Natural killer cell (primary cell): ENCODE measurements at regions of chr3 and their contacts with region 1.

Region 1: GRCh38 chr3:156554842-156555687 is at the start of gene SSR3:
- DNase-seq: peak; percentile 98 to 99
- ATAC-seq: peak; percentile 98 to 100 (median 98)
- H3K4me3 ChIP-seq: peak within 1 kb of the TSS; percentile 78
- H3K4me3 Mint-ChIP-seq: peak within 1 kb of the TSS; percentile 93
- H3K27ac ChIP-seq: peak within 1 kb of the TSS; percentile 63
- H3K27ac Mint-ChIP-seq: peak within 1 kb of the TSS; percentile 90 to 93
- H3K4me1 ChIP-seq: peaks cover 8% of the 10 kb centered on the region
- H3K4me1 Mint-ChIP-seq: peaks cover 42 to 48% of the 10 kb centered on the region in 2 donors
- H3K27me3 ChIP-seq: no peaks in the 10 kb centered on the region
- H3K27me3 Mint-ChIP-seq: no peaks in the 10 kb centered on the region
- CTCF ChIP-seq: no peak
- total RNA-seq, gene SSR3: 60.7 to 75.1 (median 63.0) TPM

Region 2: GRCh38 chr3:155870133-155870944 is 684.7 kb before region 1 on chr3 and contains the start of gene GMPS:
- intact Hi-C with region 1: loop called (anchors 5 kb)
- DNase-seq: peak; percentile 96 to 97
- ATAC-seq: peak; percentile 90 to 98 (median 92)
- H3K4me3 ChIP-seq: peak within 1 kb of the TSS; percentile 92
- H3K4me3 Mint-ChIP-seq: peak within 1 kb of the TSS; percentile 95
- H3K27ac ChIP-seq: peak within 1 kb of the TSS; percentile 95
- H3K27ac Mint-ChIP-seq: peak within 1 kb of the TSS; percentile 90 to 96
- H3K4me1 ChIP-seq: peaks cover 9% of the 10 kb centered on the region
- H3K4me1 Mint-ChIP-seq: peaks cover 18 to 20% of the 10 kb centered on the region in 2 donors
- H3K27me3 ChIP-seq: no peaks in the 10 kb centered on the region
- H3K27me3 Mint-ChIP-seq: no peaks in the 10 kb centered on the region
- CTCF ChIP-seq: peak; percentile 43
- total RNA-seq, gene GMPS: 36.7 to 49.7 (median 45.4) TPM

Region 3: GRCh38 chr3:156542715-156543555 is 12.1 kb before region 1 on chr3:
- intact Hi-C with region 1: no loop called
- DNase-seq: no peak
- ATAC-seq: no peak
- H3K4me3 ChIP-seq: no peak overlapping the region
- H3K4me3 Mint-ChIP-seq: no peak overlapping the region
- H3K27ac ChIP-seq: no peak overlapping the region
- H3K27ac Mint-ChIP-seq: no peak overlapping the region
- H3K4me1 ChIP-seq: no peaks in the 10 kb centered on the region
- H3K4me1 Mint-ChIP-seq: peaks cover 15% of the 10 kb centered on the region in 2 donors
- H3K27me3 ChIP-seq: no peaks in the 10 kb centered on the region
- H3K27me3 Mint-ChIP-seq: no peaks in the 10 kb centered on the region
- CTCF ChIP-seq: no peak

Region 4: GRCh38 chr3:156826144-156826895 is 271.3 kb after region 1 on chr3 and contains the start of gene LEKR1:
- intact Hi-C with region 1: loop called (anchors 10 kb)
- DNase-seq: peak; percentile 63 to 90
- ATAC-seq: peak; percentile 73 to 81 (median 74)
- H3K4me3 ChIP-seq: peak within 1 kb of the TSS; percentile 77
- H3K4me3 Mint-ChIP-seq: peak within 1 kb of the TSS; percentile 96
- H3K27ac ChIP-seq: peak within 1 kb of the TSS; percentile 89
- H3K27ac Mint-ChIP-seq: peak within 1 kb of the TSS; percentile 91 to 96
- H3K4me1 ChIP-seq: peaks cover 9% of the 10 kb centered on the region
- H3K4me1 Mint-ChIP-seq: peaks cover 16 to 29% of the 10 kb centered on the region in 2 donors
- H3K27me3 ChIP-seq: no peaks in the 10 kb centered on the region
- H3K27me3 Mint-ChIP-seq: no peaks in the 10 kb centered on the region
- CTCF ChIP-seq: no peak
- total RNA-seq, gene LEKR1: 1.1 to 1.7 (median 1.2) TPM

Region 5: DNA sequence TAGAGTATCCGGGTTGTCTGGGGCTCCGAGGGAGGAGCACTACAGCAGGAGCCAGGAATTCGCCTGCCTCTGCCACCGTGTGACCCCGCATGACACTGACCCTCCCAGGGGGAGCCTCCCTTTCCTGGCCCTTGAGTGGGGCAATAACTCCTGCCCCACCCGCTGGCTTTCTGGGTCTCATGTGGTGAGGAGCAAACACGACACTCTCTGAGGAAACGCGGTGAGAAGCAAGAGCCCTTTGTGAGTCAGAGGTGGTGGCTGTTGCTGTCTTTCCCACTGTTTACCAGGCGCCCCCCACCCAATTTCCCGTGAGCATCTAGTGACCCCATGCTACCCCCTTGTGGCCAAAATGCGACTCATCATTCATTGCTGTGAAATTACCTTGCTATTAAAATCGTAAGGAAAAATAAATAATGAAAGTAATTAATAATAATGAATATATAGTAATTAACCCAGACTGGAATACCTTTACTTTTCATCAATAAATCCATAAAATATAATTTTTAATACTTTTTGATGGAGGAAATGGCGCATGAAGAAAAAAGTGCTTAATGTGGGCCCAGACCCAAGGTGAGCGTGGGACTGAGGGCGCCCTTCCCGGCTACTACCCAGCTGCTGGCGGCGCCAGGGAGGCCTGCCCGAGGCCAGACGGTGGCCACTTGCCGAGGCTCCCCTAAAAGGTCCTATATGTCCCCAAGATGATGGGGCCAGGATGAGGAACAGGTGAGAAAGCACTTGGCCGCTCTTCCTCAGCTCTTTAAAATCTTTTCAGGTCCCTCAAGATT is 575.6 kb after region 1 on chr3:
- intact Hi-C with region 1: loop called (anchors 10 kb)
- DNase-seq: peak; percentile 46 to 92
- ATAC-seq: peak; percentile 70 to 73 (median 71)
- H3K4me3 ChIP-seq: no peak overlapping the region
- H3K4me3 Mint-ChIP-seq: peak overlapping the region; percentile 67
- H3K27ac ChIP-seq: peak overlapping the region; percentile 78
- H3K27ac Mint-ChIP-seq: peak overlapping the region; percentile 88
- H3K4me1 ChIP-seq: peaks cover 70% of the 10 kb centered on the region
- H3K4me1 Mint-ChIP-seq: peaks cover 43 to 50% of the 10 kb centered on the region in 2 donors
- H3K27me3 ChIP-seq: no peaks in the 10 kb centered on the region
- H3K27me3 Mint-ChIP-seq: no peaks in the 10 kb centered on the region
- CTCF ChIP-seq: peak; percentile 71